HEK293 (cell line): ENCODE measurements at regions of chr9 and their contacts with region 1.

Region 1: GRCh38 chr9:32968101-32969011 is 33.1 kb downstream of the APTX start:
- H3K4me3 ChIP-seq: no peak overlapping the region
- H3K27ac ChIP-seq: no peak overlapping the region
- H3K4me1 ChIP-seq: no peaks in the 10 kb centered on the region
- CTCF ChIP-seq: no peak

Region 2: GRCh38 chr9:32603914-32604741 is 364.2 kb before region 1 on chr9:
- CTCF ChIA-PET with region 1: interaction called, 10 read pairs
- POLR2A ChIA-PET with region 1: no interaction called
- H3K4me3 ChIP-seq: no peak overlapping the region
- H3K27ac ChIP-seq: no peak overlapping the region
- H3K4me1 ChIP-seq: no peaks in the 10 kb centered on the region
- CTCF ChIP-seq: no peak